ENCODE measurements at regions of chr13 and their contacts with region 1.

Region 1: DNA sequence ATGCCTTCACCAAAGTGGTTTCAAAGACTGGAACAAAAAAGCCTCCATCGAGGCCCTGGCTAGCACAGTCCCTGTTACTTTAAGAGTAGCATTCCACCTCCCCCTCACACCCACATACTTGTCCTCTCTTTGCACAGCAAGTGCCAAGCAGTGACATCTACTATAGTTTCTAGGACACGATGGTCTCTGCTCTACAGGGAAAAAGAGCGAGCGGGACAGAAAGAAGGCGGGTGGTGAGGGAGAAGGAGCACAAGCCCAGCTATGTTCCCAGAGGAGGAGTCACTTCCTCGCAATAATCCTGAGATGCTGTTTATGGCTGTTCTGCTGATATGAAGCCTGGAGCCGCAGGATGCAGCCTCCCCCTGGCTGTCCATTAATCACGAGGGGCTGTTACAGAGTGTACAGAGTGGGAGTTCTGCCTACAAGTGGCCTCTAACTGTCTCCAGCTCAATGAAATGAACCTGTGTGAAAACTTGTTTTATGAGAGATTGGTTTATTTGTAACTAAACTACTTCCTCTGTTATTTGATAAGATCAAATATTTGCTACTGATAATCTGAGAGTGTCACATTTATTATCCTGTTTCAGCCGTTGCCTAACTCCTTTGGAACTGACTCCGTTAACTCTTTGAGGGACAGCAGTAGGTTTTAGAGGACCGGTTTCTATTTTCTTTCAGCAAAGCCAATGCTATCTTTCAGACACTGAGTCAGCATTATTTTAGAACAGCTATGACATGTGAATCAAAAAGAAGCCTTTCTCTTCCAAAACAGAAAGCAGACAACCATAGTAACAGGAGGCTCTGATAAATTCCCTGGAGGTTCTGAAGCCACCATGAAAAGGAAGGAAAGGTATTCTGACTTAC is 208.0 kb downstream of the SPRY2 start:
- DNase-seq: peak; percentile 75 to 81 (median 79)
- ATAC-seq: peak; percentile 93
- H3K4me3 ChIP-seq: no peak overlapping the region
- H3K4me1 ChIP-seq: peaks cover 16% of the 10 kb centered on the region
- CTCF ChIP-seq: no peak

Region 2: GRCh38 chr13:79160818-79161217 is 972.2 kb before region 1 on chr13:
- intact Hi-C with region 1: no loop called
- DNase-seq: no peak
- ATAC-seq: no peak
- H3K4me3 ChIP-seq: no peak overlapping the region
- H3K4me1 ChIP-seq: no peaks in the 10 kb centered on the region
- CTCF ChIP-seq: no peak

Region 3: GRCh38 chr13:80342471-80343380 is 209.8 kb after region 1 on chr13:
- intact Hi-C with region 1: loop called in 1 of 2 experiments (anchors 5 kb)
- DNase-seq: peak; percentile 86 to 93 (median 92)
- ATAC-seq: peak; percentile 71
- H3K4me3 ChIP-seq: peak overlapping the region; percentile 6
- H3K4me1 ChIP-seq: peaks cover 5% of the 10 kb centered on the region
- CTCF ChIP-seq: peak; percentile 97